ENCODE measurements at regions of chr19 and their contacts with region 1.

Region 1: DNA sequence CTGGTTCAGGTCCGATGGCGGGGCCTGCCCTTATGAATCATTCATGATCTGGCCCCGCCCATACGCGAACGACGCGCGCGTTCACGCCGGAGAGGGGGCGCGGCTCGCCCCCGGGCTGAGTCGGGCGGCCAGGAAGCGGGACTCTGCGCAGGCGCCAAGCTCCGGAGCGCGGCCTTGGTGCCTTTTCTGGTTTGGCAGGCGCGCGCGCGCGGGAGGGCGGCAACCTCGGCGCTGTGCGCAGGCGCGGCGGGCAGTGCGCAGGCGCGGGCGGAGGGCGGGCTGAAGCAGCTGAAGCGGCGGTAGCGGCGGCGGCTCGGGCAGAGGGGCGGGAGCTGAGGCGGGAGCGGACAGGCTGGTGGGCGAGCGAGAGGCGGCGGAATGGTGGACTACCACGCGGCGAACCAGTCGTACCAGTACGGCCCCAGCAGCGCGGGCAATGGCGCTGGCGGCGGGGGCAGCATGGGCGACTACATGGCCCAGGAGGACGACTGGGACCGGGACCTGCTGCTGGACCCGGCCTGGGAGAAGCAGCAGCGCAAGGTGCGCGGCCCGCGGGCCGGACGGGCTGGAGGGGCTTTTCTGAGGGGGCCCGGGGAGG is at the start of gene ACTN4:
- DNase-seq: peak; percentile 100
- ATAC-seq: peak; percentile 91
- H3K4me3 Mint-ChIP-seq: peak within 1 kb of the TSS; percentile 95
- H3K27ac Mint-ChIP-seq: peak within 1 kb of the TSS; percentile 82
- H3K4me1 Mint-ChIP-seq: peaks cover 42% of the 10 kb centered on the region
- H3K27me3 Mint-ChIP-seq: no peaks in the 10 kb centered on the region
- CTCF ChIP-seq: no peak
- total RNA-seq, gene ACTN4: 197 and 198 TPM in 2 replicates

Region 2: DNA sequence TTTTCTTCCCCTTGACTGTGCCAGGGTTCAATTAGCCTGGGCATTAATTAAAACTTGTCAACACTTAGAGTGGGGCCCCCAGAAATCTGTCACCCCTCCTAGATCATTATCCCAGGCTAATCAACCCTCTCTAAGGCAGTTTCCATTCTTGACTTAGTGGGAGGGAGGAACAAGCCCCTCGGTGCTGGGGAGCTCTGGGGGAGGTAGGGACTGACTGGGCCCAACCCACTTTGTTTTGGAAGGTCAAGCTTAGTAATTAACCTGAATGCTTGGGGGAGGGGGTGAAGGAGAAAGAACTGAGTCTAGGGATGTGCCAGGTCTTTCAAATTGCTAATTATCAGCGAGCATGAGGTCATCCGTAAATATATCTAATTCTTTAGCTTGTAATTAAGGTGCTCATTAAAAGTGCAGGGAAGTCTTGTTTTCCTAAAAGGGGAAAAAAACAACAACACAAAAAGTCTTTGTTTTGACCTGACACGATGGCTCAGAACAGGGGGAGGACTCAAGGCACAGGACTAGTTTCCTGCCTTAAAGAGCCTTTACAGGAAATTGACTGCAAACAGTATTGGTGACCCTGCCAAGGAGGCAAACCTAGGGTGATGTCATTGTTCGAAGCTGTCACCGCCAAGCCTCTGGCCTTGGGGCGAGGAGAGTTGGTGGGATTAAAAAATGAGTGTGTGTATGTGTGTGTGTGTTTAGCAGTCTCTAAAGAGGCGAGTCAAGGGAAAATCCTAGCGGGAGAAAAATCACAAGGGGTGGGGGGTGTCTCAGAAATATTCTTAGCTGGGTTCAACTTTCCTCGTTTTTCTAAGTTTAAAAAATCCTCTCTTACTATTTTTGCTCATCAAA is 19.4 kb after region 1 on chr19:
- CTCF ChIA-PET with region 1: no interaction called
- POLR2A ChIA-PET with region 1: interaction called, 21 read pairs
- intact Hi-C with region 1: loop called (anchors 2 kb)
- DNase-seq: no peak
- ATAC-seq: peak; percentile 77
- H3K4me3 Mint-ChIP-seq: peak overlapping the region; percentile 76
- H3K27ac Mint-ChIP-seq: peak overlapping the region; percentile 91
- H3K4me1 Mint-ChIP-seq: peaks cover 80% of the 10 kb centered on the region
- H3K27me3 Mint-ChIP-seq: no peaks in the 10 kb centered on the region
- CTCF ChIP-seq: no peak

Region 3: GRCh38 chr19:38683393-38684080 is 36.1 kb after region 1 on chr19:
- CTCF ChIA-PET with region 1: no interaction called
- POLR2A ChIA-PET with region 1: no interaction called
- intact Hi-C with region 1: loop called (anchors 5 kb)
- DNase-seq: peak; percentile 34
- ATAC-seq: peak; percentile 70
- H3K4me3 Mint-ChIP-seq: peak overlapping the region; percentile 46
- H3K27ac Mint-ChIP-seq: peak overlapping the region; percentile 68
- H3K4me1 Mint-ChIP-seq: peaks cover 82% of the 10 kb centered on the region
- H3K27me3 Mint-ChIP-seq: no peaks in the 10 kb centered on the region
- CTCF ChIP-seq: no peak

Region 4: DNA sequence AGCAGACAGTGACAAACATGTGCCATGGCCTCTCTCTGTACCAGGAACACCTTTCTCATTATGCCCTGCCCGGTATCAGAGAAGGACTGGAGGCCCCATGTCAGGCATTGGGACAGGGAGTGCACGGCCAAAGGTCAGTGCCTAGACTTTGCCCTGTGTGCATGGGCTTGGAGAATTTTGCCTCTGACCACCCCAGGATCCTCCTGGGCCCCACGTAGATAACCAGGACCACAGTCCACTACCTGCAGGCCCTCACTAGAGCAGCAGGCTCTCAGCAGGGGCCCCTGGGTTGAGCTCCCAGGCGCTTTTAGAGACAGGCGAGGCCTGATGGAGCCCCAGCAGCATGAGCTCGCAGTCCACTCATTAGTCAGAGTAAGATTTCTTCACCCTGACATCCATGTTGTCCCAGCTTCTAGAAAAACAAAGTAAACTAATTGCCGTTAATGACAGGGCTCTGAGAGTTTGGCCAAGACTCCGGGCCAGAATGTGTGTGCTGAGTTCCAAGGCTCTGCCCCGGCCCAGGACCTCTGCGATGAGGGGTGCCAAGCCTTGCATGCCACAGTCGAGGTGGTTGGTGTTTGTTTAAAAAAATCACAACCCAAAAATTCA is 54.1 kb after region 1 on chr19:
- CTCF ChIA-PET with region 1: no interaction called
- POLR2A ChIA-PET with region 1: no interaction called
- intact Hi-C with region 1: no loop called
- DNase-seq: no peak
- ATAC-seq: no peak
- H3K4me3 Mint-ChIP-seq: no peak overlapping the region
- H3K27ac Mint-ChIP-seq: no peak overlapping the region
- H3K4me1 Mint-ChIP-seq: peaks cover 6% of the 10 kb centered on the region
- H3K27me3 Mint-ChIP-seq: no peaks in the 10 kb centered on the region
- CTCF ChIP-seq: no peak

Region 5: DNA sequence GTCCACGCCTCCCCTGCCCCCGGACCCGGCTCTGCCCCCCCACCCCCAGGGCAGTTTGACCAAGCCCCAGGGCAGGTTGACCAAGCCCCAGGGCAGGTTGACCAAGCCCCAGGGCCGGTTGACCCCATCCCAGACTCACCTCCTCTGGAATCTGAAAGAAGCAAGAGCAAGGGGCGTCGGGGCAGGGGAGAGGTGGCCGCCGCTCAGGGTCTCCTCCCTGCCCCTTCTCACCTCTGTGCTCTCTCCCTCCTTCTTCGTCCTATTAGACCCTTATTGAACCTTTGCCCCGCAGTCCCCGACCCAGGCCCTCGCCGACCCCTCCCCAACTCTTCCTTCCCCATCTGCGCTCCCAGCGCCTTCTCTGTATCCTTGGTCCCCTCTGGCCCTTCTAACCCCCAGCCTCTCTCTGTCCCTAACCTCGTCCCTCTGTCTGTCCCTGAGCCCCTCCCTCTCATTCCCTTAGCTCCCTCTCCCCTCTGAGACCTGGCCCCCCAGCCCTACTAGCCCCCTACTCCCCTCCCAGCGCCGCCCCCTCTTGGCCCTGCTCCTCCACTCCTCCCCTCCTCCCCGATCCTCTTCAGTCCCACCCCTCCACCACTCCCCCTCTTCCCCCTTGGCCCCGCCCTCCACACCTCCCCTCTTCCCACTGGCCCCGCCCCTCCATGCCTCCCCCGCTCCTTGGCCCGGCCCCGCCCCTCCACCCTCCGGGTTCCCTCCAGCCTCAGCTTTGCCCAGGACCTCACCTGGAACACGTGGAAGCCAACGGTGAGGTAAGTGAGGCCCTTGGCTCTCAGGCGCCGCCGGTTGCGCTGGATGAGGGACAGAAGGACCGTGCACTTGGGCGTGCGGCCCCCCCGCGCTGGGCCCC is 89.2 kb after region 1 on chr19:
- CTCF ChIA-PET with region 1: no interaction called
- POLR2A ChIA-PET with region 1: interaction called, 3 read pairs
- intact Hi-C with region 1: loop called (anchors 2 kb)
- DNase-seq: peak; percentile 64
- ATAC-seq: peak; percentile 60
- H3K4me3 Mint-ChIP-seq: peak overlapping the region; percentile 71
- H3K27ac Mint-ChIP-seq: peak overlapping the region; percentile 12
- H3K4me1 Mint-ChIP-seq: peaks cover 38% of the 10 kb centered on the region
- H3K27me3 Mint-ChIP-seq: no peaks in the 10 kb centered on the region
- CTCF ChIP-seq: no peak

Region 6: DNA sequence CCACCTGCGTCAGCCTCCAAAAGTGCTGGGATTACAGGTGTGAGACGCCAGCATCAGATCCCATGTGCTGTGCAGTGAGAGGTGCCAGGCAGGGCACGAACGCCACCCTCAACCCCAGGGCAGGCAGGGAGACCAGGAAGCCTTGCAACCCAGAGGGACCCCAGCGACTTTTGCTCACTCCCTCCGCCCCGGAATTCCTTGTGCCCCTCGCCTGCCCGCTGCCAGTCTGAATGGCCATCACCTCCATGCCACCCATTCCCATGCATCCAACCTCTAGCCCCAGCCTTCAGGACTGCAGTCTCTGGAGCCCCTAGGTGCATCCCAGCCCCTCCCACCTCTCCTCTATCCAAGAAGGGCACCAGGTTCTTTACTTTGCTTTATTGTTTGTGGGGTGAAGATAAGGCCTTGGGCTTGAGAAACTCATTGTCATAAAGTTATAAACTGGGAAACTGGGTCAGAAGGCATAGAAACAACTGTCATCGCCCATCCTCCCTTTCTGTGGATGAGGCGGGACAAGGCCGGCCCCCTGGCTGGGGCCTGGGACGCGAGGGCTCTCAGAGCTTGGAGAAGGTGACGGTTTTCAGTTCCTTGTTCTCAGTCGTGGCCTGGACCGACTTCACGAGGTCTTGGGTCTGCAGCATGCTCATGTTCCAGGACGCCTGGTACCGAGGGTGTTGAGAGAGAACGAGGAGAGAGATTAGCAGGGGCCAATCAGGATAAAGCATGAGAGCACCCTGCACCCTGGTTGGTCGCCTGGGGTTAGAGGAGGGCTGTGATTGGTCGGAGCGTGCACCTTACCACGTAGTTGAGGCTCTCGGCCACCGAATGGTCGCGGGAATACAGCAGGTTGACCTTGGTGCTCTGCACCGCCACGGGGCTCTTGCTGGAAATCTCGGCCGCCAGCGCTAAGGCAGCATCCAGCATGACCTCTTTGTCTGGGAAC is 167.9 kb after region 1 on chr19:
- CTCF ChIA-PET with region 1: no interaction called
- POLR2A ChIA-PET with region 1: no interaction called
- intact Hi-C with region 1: no loop called
- DNase-seq: no peak
- ATAC-seq: no peak
- H3K4me3 Mint-ChIP-seq: no peak overlapping the region
- H3K27ac Mint-ChIP-seq: no peak overlapping the region
- H3K4me1 Mint-ChIP-seq: no peaks in the 10 kb centered on the region
- H3K27me3 Mint-ChIP-seq: no peaks in the 10 kb centered on the region
- CTCF ChIP-seq: no peak